ENCODE measurements at regions of chr1 and their contacts with region 1.

Region 1: GRCh38 chr1:165697881-165698760 is at the start of gene ALDH9A1:
- DNase-seq: peak; percentile 32
- ATAC-seq: peak; percentile 98
- H3K4me3 ChIP-seq: peak within 1 kb of the TSS; percentile 71 to 97
- H3K27ac ChIP-seq: peak within 1 kb of the TSS; percentile 87
- H3K4me1 ChIP-seq: peaks cover 15% of the 10 kb centered on the region
- H3K27me3 ChIP-seq: no peaks in the 10 kb centered on the region; the same call in 1 of the 2 replicates
- CTCF ChIP-seq: peak; percentile 81
- total RNA-seq, gene ALDH9A1: 30.3 TPM

Region 2: DNA sequence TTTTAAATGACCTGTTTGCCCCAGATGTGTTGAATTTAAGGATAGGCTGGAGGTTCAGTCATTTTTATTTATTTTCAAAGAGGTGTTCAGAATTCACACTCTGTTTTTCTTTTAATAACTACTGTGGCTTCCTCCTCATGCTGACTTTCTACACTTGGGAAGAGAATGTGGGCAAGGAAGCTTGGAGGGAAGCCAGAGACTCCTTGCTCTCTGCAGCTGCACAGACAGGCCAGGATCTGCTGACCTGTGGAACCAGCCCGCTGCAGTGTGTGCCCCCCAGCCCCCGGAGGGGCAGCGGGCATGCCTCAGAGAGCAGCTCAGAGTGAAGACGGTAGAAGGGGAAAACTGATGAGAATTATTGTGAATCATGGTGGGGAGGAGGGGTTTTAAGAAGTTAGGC is 50.2 kb before region 1 on chr1:
- CTCF ChIA-PET with region 1: no interaction called
- POLR2A ChIA-PET with region 1: interaction called, 13 read pairs
- in situ Hi-C with region 1: no loop called
- intact Hi-C with region 1: no loop called
- DNase-seq: no peak
- ATAC-seq: no peak
- H3K4me3 ChIP-seq: no peak overlapping the region
- H3K27ac ChIP-seq: no peak overlapping the region
- H3K4me1 ChIP-seq: no peaks in the 10 kb centered on the region
- H3K27me3 ChIP-seq: no peaks in the 10 kb centered on the region
- CTCF ChIP-seq: no peak